Ascending aorta (tissue), 2 donors: ENCODE measurements at regions of chr2 and their contacts with region 1.

Region 1: DNA sequence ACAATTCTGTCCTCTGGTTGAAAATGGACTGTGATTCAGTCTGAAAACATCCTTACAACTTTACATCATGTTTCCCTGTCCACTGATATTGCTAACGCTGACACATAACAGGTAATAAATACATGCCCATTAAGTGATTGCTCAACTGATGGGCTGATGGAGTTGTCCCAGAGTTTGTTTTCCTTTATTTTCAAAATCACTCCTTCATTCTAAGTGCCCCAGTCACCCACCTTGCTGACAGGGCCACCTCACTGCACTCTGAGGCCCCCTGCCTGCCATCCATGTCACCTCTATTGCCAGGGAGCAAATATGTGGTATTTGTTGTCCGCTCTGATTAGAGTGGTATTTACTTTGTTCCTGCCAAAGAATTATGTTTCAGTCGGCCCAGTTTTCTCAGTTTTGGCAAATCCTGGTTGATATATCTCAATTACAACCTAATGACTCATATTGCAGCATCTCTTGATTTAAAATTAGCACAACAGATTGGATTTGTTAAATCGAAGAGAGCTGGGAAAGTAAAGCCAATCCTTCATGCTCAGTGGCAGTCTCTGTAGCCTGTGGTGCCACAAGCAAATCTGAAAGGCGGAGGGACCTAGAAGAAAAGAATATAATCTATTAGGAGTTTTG is 105.1 kb downstream of the RDH14 start:
- DNase-seq: peak in 1 of 2 donors; percentile 71
- H3K4me3 ChIP-seq: no peak overlapping the region
- H3K27ac ChIP-seq: peak overlapping the region; percentile 82 to 83
- H3K4me1 ChIP-seq: peaks cover 9 to 22% of the 10 kb centered on the region in 2 donors
- H3K27me3 ChIP-seq: no peaks in the 10 kb centered on the region
- CTCF ChIP-seq: peak in 2 of 3 experiments; percentile 43

Region 2: GRCh38 chr2:17995593-17995992 is 459.8 kb before region 1 on chr2:
- intact Hi-C with region 1: no loop called
- DNase-seq: no peak
- H3K4me3 ChIP-seq: no peak overlapping the region
- H3K27ac ChIP-seq: no peak overlapping the region
- H3K4me1 ChIP-seq: no peaks in the 10 kb centered on the region
- H3K27me3 ChIP-seq: no peaks in the 10 kb centered on the region
- CTCF ChIP-seq: no peak

Region 3: GRCh38 chr2:18834341-18834740 is 379.0 kb after region 1 on chr2:
- intact Hi-C with region 1: loop called (anchors 10 kb)
- DNase-seq: no peak
- H3K4me3 ChIP-seq: no peak overlapping the region
- H3K27ac ChIP-seq: no peak overlapping the region
- H3K4me1 ChIP-seq: peaks cover 0 to 21% of the 10 kb centered on the region in 2 donors
- H3K27me3 ChIP-seq: no peaks in the 10 kb centered on the region
- CTCF ChIP-seq: no peak

Region 4: DNA sequence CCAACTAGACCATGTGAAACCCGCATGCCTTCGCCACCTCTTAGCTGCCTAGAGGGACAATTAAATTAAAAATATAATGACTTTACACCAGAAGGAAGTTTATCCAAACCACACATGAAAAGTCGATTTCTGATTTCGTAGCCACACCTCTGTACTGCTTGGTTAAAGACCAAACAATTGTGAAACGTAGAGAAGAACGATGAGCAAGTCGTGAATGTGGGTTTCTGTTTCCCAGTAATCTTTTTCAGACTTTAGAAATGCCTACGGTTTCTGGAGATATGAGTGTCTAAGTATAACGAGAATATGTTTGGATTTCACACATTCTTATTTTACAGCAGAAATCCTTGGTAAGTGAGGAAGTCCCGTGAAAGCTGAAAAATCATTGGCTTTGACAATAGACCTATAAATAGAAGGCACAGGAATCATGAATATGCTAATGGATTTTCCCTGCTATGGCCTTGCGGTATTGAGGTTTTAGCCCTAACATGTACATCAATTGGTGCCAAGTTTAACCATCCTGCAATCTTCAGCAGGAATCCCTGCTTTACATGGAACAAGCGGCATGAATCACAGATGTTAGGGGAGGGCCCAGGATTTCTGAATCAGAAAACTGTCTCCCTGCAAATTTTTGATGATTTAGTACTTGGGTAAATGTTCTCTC is 1340.8 kb after region 1 on chr2:
- intact Hi-C with region 1: loop called (anchors 10 kb)
- DNase-seq: no peak
- H3K4me3 ChIP-seq: no peak overlapping the region
- H3K27ac ChIP-seq: peak overlapping the region; percentile 53 to 61
- H3K4me1 ChIP-seq: peaks cover 0 to 15% of the 10 kb centered on the region in 2 donors
- H3K27me3 ChIP-seq: no peaks in the 10 kb centered on the region
- CTCF ChIP-seq: no peak